Dendritic cell treated with granulocyte-macrophage colony-stimulating factor and Interleukin-4, amounts not matched to agents 40 ng/mL and 50 ng/mL, for 4 days (primary cell): ENCODE measurements at regions of chr6 and their contacts with region 1.

Region 1: DNA sequence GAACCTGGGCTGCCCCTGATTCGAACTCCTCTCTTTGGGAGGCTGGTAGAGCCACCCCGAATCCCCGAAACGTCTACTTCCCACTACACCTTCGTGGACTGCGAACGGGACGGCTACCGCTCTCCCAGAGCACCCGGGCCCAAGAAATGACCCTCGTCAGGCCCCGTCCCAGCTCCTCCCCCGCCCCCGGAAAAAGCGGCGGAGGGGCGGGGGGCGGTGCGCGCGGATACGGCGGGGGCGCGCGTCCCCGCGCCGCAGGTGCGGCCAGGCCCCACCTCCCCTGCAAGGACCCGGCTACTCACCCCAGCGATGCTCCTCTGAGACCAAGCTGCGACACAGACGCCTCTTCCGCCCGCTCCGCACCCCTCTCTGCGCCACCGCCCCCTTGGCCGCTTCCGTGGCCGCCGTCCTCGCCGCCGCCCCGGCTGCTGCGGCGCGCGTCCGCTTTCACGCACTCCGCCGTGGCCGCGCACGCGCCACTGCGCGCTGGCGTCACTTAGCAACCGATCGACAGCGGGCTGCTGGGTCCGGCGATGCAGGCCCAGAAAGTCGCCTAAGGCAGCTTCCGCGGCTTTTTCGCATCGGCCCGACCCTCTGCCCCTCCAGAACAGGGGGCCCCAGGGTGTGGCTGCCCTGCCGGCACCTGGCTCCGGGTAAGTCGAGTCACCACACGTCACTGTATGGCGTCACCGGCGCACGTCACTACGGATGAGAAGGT is at the start of gene BTBD9:
- H3K4me3 Mint-ChIP-seq: peak within 1 kb of the TSS; percentile 90
- H3K27ac Mint-ChIP-seq: peak within 1 kb of the TSS; percentile 90
- H3K4me1 Mint-ChIP-seq: peaks cover 39% of the 10 kb centered on the region
- H3K27me3 Mint-ChIP-seq: no peaks in the 10 kb centered on the region

Region 2: DNA sequence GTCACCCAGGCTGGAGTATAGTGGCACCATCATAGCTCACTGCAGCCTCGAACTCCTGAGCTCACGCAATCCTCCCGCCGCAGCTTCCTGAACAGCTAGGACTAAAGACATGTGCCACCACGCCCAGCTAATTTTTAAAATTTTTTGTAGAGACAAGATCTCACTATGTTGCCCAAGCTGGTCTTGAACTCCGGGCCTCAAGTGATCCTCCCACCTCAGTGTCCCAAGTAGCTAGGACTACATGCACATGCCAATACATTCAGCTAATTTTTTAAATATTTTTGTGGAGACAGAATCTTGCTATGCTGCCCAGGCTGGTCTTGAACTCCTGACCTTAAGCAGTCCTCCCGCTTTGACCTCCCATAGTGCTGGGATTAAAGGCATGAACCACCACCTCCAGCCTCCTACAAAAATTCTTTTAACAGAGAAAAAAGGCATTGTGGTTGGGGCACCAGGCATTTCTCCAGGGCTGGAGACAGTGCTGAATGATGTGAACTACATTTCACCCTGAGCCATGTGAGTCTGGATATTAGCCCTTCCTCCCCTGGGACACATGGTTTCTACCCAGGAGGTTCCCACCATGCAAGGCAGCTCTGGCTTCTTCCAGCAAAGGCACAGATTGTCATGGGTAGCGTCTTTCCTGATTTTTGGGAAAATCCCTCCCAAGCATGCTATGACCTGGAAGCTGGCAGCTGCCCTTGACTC is 1243.0 kb before region 1 on chr6:
- intact Hi-C with region 1: no loop called
- H3K4me3 Mint-ChIP-seq: no peak overlapping the region
- H3K27ac Mint-ChIP-seq: no peak overlapping the region
- H3K4me1 Mint-ChIP-seq: peaks cover 10% of the 10 kb centered on the region
- H3K27me3 Mint-ChIP-seq: peaks cover 5% of the 10 kb centered on the region

Region 3: DNA sequence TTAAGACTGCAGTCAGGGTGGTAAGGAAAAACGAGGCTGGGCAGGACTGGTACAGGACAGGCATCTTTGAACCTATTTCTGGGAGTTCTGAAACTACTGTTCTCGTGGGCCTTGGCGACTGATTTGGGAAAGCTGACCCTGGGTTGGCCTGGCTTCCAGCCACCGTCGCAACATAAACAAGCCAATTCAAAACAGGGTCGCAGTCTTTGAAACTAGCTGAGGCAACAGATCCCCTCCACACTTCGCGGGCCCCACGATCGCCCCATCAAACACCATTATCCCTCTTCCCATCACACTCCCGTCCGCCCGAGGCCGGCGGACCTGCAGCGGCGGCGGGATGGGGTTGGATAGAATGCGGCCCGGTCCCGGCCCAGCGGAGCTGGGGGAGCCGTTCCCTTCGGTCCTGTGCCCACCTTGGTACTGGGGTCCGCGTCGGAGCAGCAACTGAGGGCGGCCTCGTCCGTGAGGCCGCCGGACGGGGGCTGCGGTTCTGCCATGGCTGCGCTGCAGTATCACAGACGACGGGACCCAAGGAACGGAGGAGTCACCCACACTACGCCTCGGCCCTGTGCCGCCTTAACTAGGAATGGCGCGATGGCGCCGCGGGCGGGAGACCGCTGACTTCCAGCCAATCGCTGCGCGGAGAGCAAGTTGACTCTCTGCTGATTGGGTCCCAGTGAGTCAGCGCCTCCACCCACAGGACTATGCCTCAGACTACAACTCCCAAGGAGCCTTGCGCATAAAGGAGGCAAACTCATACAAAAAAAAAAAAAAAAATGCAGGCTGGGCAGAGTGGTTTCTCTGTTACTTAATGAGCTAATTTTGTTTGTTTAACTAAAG is 63.1 kb after region 1 on chr6 and contains the start of gene GLO1:
- intact Hi-C with region 1: loop called (anchors 10 kb)
- H3K4me3 Mint-ChIP-seq: peak within 1 kb of the TSS; percentile 92
- H3K27ac Mint-ChIP-seq: peak within 1 kb of the TSS; percentile 92
- H3K4me1 Mint-ChIP-seq: peaks cover 22% of the 10 kb centered on the region
- H3K27me3 Mint-ChIP-seq: peaks cover 10% of the 10 kb centered on the region